CD14-positive monocyte (primary cell): ENCODE measurements at regions of chr20 and their contacts with region 1.

Region 1: GRCh38 chr20:62808211-62808865 is 3.7 kb downstream of the OGFR start:
- DNase-seq: peak; percentile 53 to 69 (median 64)
- H3K4me3 ChIP-seq: no peak overlapping the region
- H3K4me3 Mint-ChIP-seq: no peak overlapping the region
- H3K27ac ChIP-seq: peak overlapping the region in 1 of 2 donors; percentile 15
- H3K27ac Mint-ChIP-seq: peak overlapping the region in 4 of 7 donors; percentile 12 to 71 (median 44)
- H3K4me1 ChIP-seq: peaks cover 40 to 43% of the 10 kb centered on the region in 2 donors
- H3K4me1 Mint-ChIP-seq: peaks cover 35% of the 10 kb centered on the region
- H3K27me3 ChIP-seq: no peaks in the 10 kb centered on the region
- H3K27me3 Mint-ChIP-seq: peaks cover 0 to 13% (median 7%) of the 10 kb centered on the region in 3 donors
- CTCF ChIP-seq: peak; percentile 95

Region 2: GRCh38 chr20:62386383-62387218 is 421.7 kb before region 1 on chr20 and contains the start of gene RPS21:
- intact Hi-C with region 1: loop called in 1 of 2 experiments (anchors 10 kb)
- DNase-seq: peak; percentile 90 to 92 (median 90)
- H3K4me3 ChIP-seq: peak within 1 kb of the TSS; percentile 84 to 96 (median 84)
- H3K4me3 Mint-ChIP-seq: peak within 1 kb of the TSS; percentile 89 to 91
- H3K27ac ChIP-seq: peak within 1 kb of the TSS; percentile 57 to 96
- H3K27ac Mint-ChIP-seq: peak within 1 kb of the TSS; percentile 85 to 96 (median 91)
- H3K4me1 ChIP-seq: peaks cover 19 to 25% of the 10 kb centered on the region in 2 donors
- H3K4me1 Mint-ChIP-seq: peaks cover 30% of the 10 kb centered on the region
- H3K27me3 ChIP-seq: no peaks in the 10 kb centered on the region
- H3K27me3 Mint-ChIP-seq: no peaks in the 10 kb centered on the region
- CTCF ChIP-seq: no peak
- polyA plus RNA-seq, gene RPS21: 799 to 6,263 (median 968) TPM

Region 3: GRCh38 chr20:62642040-62642665 is 166.2 kb before region 1 on chr20 and contains the start of gene SLCO4A1:
- intact Hi-C with region 1: no loop called
- DNase-seq: peak; percentile 47 to 53 (median 50)
- H3K4me3 ChIP-seq: peak within 1 kb of the TSS; percentile 3 to 71 (median 23)
- H3K4me3 Mint-ChIP-seq: peak within 1 kb of the TSS; percentile 72 to 80
- H3K27ac ChIP-seq: no peak within 1 kb of the TSS
- H3K27ac Mint-ChIP-seq: peak within 1 kb of the TSS in 1 of 7 donors; percentile 46
- H3K4me1 ChIP-seq: peaks cover 35 to 46% of the 10 kb centered on the region in 2 donors
- H3K4me1 Mint-ChIP-seq: peaks cover 25% of the 10 kb centered on the region
- H3K27me3 ChIP-seq: peaks cover 6 to 43% of the 10 kb centered on the region in 2 donors
- H3K27me3 Mint-ChIP-seq: peaks cover 31 to 55% (median 33%) of the 10 kb centered on the region in 3 donors
- CTCF ChIP-seq: no peak
- polyA plus RNA-seq, gene SLCO4A1: 0.05 to 0.42 (median 0.26) TPM

Region 4: DNA sequence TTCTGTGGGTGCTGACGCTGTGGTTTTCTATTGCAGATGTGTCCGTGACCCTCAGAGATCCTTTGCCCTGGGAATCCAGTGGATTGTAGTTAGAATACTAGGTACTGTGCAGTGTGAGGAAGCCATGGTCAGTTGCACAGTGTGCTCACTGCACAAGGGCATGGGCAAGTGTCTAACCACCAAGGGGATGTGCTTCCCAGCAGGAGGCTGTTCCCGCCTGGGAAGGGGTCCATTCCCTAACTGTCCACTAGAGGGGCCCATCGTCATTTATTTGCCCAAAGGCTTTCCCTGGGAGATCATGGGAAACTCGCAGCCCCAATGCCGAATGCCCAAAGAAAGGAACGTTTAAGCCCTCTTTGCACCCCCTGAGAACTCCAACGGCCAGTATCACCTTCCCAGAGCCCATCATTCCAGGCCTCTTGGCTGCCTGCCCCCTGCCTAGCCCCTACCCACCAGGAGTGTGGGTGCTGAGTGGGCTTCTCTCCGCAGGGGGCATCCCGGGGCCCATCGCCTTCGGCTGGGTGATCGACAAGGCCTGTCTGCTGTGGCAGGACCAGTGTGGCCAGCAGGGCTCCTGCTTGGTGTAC is 139.8 kb before region 1 on chr20:
- intact Hi-C with region 1: loop called (anchors 5 kb)
- DNase-seq: peak in 2 of 3 donors; percentile 69 to 73
- H3K4me3 ChIP-seq: no peak overlapping the region
- H3K4me3 Mint-ChIP-seq: no peak overlapping the region
- H3K27ac ChIP-seq: no peak overlapping the region
- H3K27ac Mint-ChIP-seq: no peak overlapping the region
- H3K4me1 ChIP-seq: peaks cover 32 to 65% of the 10 kb centered on the region in 2 donors
- H3K4me1 Mint-ChIP-seq: peaks cover 47% of the 10 kb centered on the region
- H3K27me3 ChIP-seq: no peaks in the 10 kb centered on the region
- H3K27me3 Mint-ChIP-seq: peaks cover 0 to 2% (median 1%) of the 10 kb centered on the region in 3 donors
- CTCF ChIP-seq: peak; percentile 96

Region 5: DNA sequence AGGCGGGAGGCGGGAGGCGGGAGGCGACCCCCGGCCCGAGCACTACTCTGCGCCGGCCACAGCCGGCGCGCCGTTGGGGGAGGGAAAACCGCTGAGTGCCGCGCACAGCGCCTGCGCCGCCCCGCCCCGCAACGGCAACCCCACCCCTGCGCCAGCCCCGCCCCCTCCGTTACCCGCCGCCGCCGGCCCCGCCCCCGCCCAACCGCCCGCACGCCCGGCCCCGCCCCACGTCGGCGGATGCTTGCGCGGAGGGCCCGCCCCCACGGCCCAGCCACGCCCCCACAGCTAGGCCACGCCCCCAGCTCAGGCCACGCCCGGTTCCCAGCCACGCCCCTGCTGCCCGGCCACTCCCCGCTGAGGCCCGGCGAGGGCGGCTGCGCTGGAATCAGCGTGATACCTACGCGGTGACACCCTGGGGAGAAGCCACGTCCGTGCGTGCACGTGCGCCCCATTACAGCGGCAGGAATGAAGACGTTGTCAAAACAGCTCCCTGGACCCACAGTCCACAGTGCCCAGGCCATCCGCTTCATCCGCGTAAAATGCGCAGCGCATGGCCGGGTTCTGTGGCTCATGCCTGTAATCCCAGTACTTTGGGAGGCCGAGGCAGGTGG is 53.5 kb after region 1 on chr20 and contains the start of gene TCFL5:
- intact Hi-C with region 1: loop called in 1 of 2 experiments (anchors 5 kb)
- DNase-seq: peak; percentile 84 to 92 (median 84)
- H3K4me3 ChIP-seq: peak within 1 kb of the TSS in 2 of 3 experiments; percentile 24 to 59
- H3K4me3 Mint-ChIP-seq: peak within 1 kb of the TSS; percentile 69 to 82
- H3K27ac ChIP-seq: no peak within 1 kb of the TSS
- H3K27ac Mint-ChIP-seq: peak within 1 kb of the TSS in 3 of 7 donors; percentile 23 to 66 (median 30)
- H3K4me1 ChIP-seq: peaks cover 10 to 13% of the 10 kb centered on the region in 2 donors
- H3K4me1 Mint-ChIP-seq: peaks cover 15% of the 10 kb centered on the region
- H3K27me3 ChIP-seq: peaks cover 8 to 12% of the 10 kb centered on the region in 2 donors
- H3K27me3 Mint-ChIP-seq: peaks cover 20 to 28% (median 27%) of the 10 kb centered on the region in 3 donors
- CTCF ChIP-seq: no peak
- polyA plus RNA-seq, gene TCFL5: 0.38 to 3.5 (median 0.89) TPM